ENCODE measurements at regions of chr1 and their contacts with region 1.

Region 1: GRCh38 chr1:88291611-88292354 is 392.3 kb upstream of the PKN2 start:
- DNase-seq: no peak
- H3K4me3 ChIP-seq: no peak overlapping the region
- H3K27ac ChIP-seq: no peak overlapping the region
- H3K4me1 ChIP-seq: peaks cover 0 to 7% (median 2%) of the 10 kb centered on the region in 4 experiments; a peak in 2 of 7 replicates
- H3K27me3 ChIP-seq: no peaks in the 10 kb centered on the region
- CTCF ChIP-seq: no peak
- EP300 ChIP-seq: no peak
- POLR2A ChIP-seq: no peak
- RAD21 ChIP-seq: no peak

Region 2: GRCh38 chr1:88276163-88276562 is 15.6 kb before region 1 on chr1:
- CTCF ChIA-PET with region 1: no interaction called
- POLR2A ChIA-PET with region 1: no interaction called
- DNase-seq: no peak
- H3K4me3 ChIP-seq: no peak overlapping the region
- H3K27ac ChIP-seq: no peak overlapping the region
- H3K4me1 ChIP-seq: no peaks in the 10 kb centered on the region
- H3K27me3 ChIP-seq: no peaks in the 10 kb centered on the region
- CTCF ChIP-seq: no peak
- EP300 ChIP-seq: no peak
- POLR2A ChIP-seq: no peak
- RAD21 ChIP-seq: no peak

Region 3: GRCh38 chr1:88302843-88303486 is 11.2 kb after region 1 on chr1:
- CTCF ChIA-PET with region 1: interaction called, 19 read pairs
- POLR2A ChIA-PET with region 1: no interaction called
- DNase-seq: peak in 1 of 2 experiments; percentile 3
- H3K4me3 ChIP-seq: no peak overlapping the region
- H3K27ac ChIP-seq: no peak overlapping the region
- H3K4me1 ChIP-seq: no peaks in the 10 kb centered on the region; a peak in 1 of 7 replicates
- H3K27me3 ChIP-seq: no peaks in the 10 kb centered on the region
- CTCF ChIP-seq: peak in 2 of 3 experiments; percentile 31 to 56; a peak in 3 of 4 replicates
- EP300 ChIP-seq: no peak
- POLR2A ChIP-seq: no peak
- RAD21 ChIP-seq: peak; percentile 76 to 85

Region 4: DNA sequence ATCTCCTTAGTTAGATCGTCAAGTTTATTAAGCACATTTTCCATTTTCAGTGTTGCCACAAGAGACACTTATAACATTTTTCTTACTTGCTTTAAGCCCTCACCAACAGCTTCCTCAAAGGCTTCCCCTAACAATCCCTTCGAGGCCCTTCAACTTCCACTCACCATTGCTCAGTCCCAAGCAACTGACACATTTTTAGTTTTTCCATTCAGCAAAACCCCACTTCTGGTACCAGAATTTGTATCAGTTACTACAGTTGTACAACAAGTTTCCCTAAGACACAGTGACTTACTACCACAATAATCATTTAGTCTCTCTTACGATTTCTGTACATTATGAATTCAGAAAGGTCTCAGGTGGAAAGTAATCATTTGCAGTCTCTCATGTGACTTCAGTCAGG is 115.5 kb after region 1 on chr1:
- CTCF ChIA-PET with region 1: no interaction called
- POLR2A ChIA-PET with region 1: no interaction called
- DNase-seq: no peak
- H3K4me3 ChIP-seq: no peak overlapping the region
- H3K27ac ChIP-seq: no peak overlapping the region
- H3K4me1 ChIP-seq: peaks cover 0 to 3% (median 1%) of the 10 kb centered on the region in 4 experiments; a peak in 1 of 7 replicates
- H3K27me3 ChIP-seq: no peaks in the 10 kb centered on the region
- CTCF ChIP-seq: no peak
- EP300 ChIP-seq: no peak
- POLR2A ChIP-seq: no peak
- RAD21 ChIP-seq: no peak

Measured in H1 (cell line).